Activated naive CD8-positive, alpha-beta T cell treated with anti-CD3 and anti-CD28 coated beads, Interleukin-2, amount 10 ng/mL, durations not matched to agents 7 days and 5 days (primary cell): ENCODE measurements at regions of chr1 and their contacts with region 1.

Region 1: GRCh38 chr1:92994105-92994712 is 32.9 kb upstream of the DIPK1A start:
- DNase-seq: no peak
- ATAC-seq: peak; percentile 71
- H3K4me3 Mint-ChIP-seq: no peak overlapping the region
- H3K27ac Mint-ChIP-seq: no peak overlapping the region
- H3K4me1 Mint-ChIP-seq: peaks cover 45% of the 10 kb centered on the region
- H3K27me3 Mint-ChIP-seq: no peaks in the 10 kb centered on the region

Region 2: GRCh38 chr1:92968138-92969032 is 25.8 kb before region 1 on chr1:
- POLR2A ChIA-PET with region 1: interaction called, 91 read pairs
- DNase-seq: no peak
- ATAC-seq: peak; percentile 49
- H3K4me3 Mint-ChIP-seq: no peak overlapping the region
- H3K27ac Mint-ChIP-seq: no peak overlapping the region
- H3K4me1 Mint-ChIP-seq: peaks cover 24% of the 10 kb centered on the region
- H3K27me3 Mint-ChIP-seq: no peaks in the 10 kb centered on the region

Region 3: GRCh38 chr1:92975551-92976232 is 18.5 kb before region 1 on chr1:
- POLR2A ChIA-PET with region 1: interaction called, 11 read pairs
- DNase-seq: no peak
- ATAC-seq: peak; percentile 18
- H3K4me3 Mint-ChIP-seq: peak overlapping the region; percentile 3
- H3K27ac Mint-ChIP-seq: peak overlapping the region; percentile 55
- H3K4me1 Mint-ChIP-seq: peaks cover 44% of the 10 kb centered on the region
- H3K27me3 Mint-ChIP-seq: no peaks in the 10 kb centered on the region

Region 4: GRCh38 chr1:92980732-92981647 is 13.2 kb before region 1 on chr1:
- POLR2A ChIA-PET with region 1: interaction called, 11 read pairs
- DNase-seq: no peak
- ATAC-seq: peak; percentile 87
- H3K4me3 Mint-ChIP-seq: peak overlapping the region; percentile 70
- H3K27ac Mint-ChIP-seq: peak overlapping the region; percentile 97
- H3K4me1 Mint-ChIP-seq: peaks cover 36% of the 10 kb centered on the region
- H3K27me3 Mint-ChIP-seq: no peaks in the 10 kb centered on the region

Region 5: GRCh38 chr1:93007941-93008577 is 13.8 kb after region 1 on chr1:
- POLR2A ChIA-PET with region 1: no interaction called
- DNase-seq: no peak
- ATAC-seq: no peak
- H3K4me3 Mint-ChIP-seq: no peak overlapping the region
- H3K27ac Mint-ChIP-seq: no peak overlapping the region
- H3K4me1 Mint-ChIP-seq: no peaks in the 10 kb centered on the region
- H3K27me3 Mint-ChIP-seq: peaks cover 25% of the 10 kb centered on the region